AG04450 (cell line): ENCODE measurements at regions of chr2 and their contacts with region 1.

Region 1: DNA sequence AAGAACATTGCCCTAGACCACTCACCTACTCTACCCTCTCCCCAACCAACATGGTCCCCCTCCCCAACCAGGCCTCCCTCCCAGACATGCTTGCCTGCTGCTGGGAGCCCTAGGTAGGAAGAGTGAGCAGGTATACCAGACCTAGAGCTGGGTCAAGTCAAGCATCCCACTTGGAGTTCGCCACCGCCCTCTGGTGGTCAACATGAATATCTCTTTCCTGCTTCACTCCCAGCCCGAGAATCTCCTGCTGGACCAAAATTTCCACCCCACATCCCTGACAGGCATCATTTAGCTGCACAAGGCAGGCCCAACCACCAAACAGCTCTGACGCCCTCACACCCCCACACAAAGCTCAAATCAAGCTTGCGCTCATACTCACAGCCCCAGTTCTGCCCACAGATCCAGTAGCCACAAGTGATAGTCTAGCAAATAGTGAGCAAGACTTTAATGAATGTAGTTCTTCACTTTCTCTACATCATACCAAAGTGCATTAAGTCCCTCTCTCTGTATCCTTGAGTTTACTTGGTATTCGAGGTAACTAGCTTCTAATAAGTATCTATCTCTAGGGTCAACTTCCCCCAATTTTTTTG is 116.0 kb downstream of the TNS1 start:
- DNase-seq: peak; percentile 55
- H3K4me3 ChIP-seq: no peak overlapping the region
- H3K27ac ChIP-seq: no peak overlapping the region
- H3K27me3 ChIP-seq: no peaks in the 10 kb centered on the region
- CTCF ChIP-seq: peak; percentile 83

Region 2: DNA sequence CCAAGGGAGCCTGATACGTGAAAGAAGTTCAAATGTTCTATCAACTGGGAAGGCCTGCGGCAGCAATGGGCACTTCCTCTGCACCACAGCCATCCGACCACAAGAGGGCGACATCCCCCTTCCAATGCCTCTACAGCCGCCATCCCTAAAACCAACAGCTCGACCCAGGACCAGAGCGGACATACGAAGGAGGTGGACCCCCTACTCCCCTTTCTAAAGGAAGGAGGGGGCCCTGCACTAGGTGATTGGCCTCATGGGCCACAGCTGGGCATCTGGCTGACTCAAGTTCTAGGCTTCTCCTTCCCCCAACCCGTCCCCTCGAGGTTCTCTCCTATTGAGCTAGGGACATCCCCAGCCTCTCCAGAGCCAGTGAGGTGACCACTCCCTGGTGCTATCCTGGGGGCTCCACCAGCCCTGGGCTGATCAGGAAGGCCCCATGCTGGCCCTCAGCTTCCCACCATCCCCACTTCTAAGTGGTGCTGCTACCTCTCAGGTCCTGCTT is 101.2 kb before region 1 on chr2:
- CTCF ChIA-PET with region 1: interaction called, 97 read pairs
- POLR2A ChIA-PET with region 1: no interaction called
- DNase-seq: peak; percentile 29
- H3K4me3 ChIP-seq: no peak overlapping the region
- H3K27ac ChIP-seq: no peak overlapping the region
- H3K27me3 ChIP-seq: no peaks in the 10 kb centered on the region
- CTCF ChIP-seq: peak; percentile 96

Region 3: DNA sequence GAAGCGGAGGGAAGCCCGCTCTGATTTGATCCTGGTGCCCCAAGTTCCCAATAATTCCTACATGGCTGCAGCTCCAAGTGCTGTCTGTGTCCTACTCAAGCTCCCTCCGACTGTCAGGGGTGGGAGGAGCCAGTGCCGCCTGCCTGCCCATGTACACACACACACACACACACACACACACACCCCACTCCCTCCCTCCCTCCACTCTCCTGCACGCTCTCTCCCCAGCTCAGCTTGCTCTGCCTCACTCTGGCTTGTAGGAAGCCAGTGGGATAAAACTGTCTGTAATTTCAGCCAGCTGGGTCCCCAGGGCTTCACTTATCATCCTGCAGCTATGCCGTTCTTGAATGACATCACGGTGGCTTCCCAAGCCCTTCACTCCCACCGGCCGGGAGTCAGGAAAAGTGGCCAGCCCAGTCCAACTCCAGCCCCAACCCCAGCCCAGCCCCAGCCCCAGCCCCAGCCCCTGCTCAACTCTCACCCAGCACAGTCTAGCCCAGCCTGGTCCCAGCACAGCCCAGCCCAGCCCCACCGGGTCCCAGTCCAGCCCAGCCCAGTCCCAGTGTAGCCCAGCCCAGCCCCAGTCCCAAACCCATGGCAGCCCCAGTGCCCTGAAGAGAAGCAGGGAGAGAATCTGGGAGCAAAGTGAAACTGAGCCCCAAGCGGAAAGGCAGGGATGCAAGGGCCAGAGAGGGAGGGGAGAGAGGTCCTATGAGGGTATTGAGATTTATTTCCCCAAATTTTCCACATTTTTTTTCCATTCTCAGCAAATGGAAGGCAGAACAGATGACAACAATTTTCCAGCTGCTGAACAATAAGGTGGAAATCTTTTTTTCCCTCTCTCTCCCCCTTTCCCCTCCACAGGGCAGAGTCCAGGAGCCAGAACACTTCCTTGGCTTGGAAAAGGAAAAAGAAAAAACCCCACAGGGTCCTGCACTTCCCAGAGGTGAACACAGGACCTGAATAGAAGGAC is 28.0 kb before region 1 on chr2:
- CTCF ChIA-PET with region 1: interaction called, 10 read pairs
- POLR2A ChIA-PET with region 1: no interaction called
- DNase-seq: peak; percentile 76
- H3K4me3 ChIP-seq: no peak overlapping the region
- H3K27ac ChIP-seq: peak overlapping the region; percentile 74
- H3K27me3 ChIP-seq: no peaks in the 10 kb centered on the region
- CTCF ChIP-seq: no peak

Region 4: GRCh38 chr2:217875138-217875537 is 11.7 kb before region 1 on chr2:
- CTCF ChIA-PET with region 1: interaction called, 30 read pairs
- POLR2A ChIA-PET with region 1: no interaction called
- DNase-seq: no peak
- H3K4me3 ChIP-seq: no peak overlapping the region
- H3K27ac ChIP-seq: no peak overlapping the region
- H3K27me3 ChIP-seq: no peaks in the 10 kb centered on the region
- CTCF ChIP-seq: no peak

Region 5: GRCh38 chr2:217943446-217944389 is 56.9 kb after region 1 on chr2:
- CTCF ChIA-PET with region 1: interaction called, 13 read pairs
- POLR2A ChIA-PET with region 1: no interaction called
- DNase-seq: no peak
- H3K4me3 ChIP-seq: peak overlapping the region; percentile 64
- H3K27ac ChIP-seq: no peak overlapping the region
- H3K27me3 ChIP-seq: no peaks in the 10 kb centered on the region
- CTCF ChIP-seq: peak; percentile 34

Region 6: GRCh38 chr2:217988014-217988839 is 101.4 kb after region 1 on chr2:
- CTCF ChIA-PET with region 1: interaction called, 16 read pairs
- POLR2A ChIA-PET with region 1: no interaction called
- DNase-seq: no peak
- H3K4me3 ChIP-seq: no peak overlapping the region
- H3K27ac ChIP-seq: no peak overlapping the region
- H3K27me3 ChIP-seq: no peaks in the 10 kb centered on the region
- CTCF ChIP-seq: peak; percentile 93